ENCODE measurements at regions of chr17 and their contacts with region 1.

Region 1: DNA sequence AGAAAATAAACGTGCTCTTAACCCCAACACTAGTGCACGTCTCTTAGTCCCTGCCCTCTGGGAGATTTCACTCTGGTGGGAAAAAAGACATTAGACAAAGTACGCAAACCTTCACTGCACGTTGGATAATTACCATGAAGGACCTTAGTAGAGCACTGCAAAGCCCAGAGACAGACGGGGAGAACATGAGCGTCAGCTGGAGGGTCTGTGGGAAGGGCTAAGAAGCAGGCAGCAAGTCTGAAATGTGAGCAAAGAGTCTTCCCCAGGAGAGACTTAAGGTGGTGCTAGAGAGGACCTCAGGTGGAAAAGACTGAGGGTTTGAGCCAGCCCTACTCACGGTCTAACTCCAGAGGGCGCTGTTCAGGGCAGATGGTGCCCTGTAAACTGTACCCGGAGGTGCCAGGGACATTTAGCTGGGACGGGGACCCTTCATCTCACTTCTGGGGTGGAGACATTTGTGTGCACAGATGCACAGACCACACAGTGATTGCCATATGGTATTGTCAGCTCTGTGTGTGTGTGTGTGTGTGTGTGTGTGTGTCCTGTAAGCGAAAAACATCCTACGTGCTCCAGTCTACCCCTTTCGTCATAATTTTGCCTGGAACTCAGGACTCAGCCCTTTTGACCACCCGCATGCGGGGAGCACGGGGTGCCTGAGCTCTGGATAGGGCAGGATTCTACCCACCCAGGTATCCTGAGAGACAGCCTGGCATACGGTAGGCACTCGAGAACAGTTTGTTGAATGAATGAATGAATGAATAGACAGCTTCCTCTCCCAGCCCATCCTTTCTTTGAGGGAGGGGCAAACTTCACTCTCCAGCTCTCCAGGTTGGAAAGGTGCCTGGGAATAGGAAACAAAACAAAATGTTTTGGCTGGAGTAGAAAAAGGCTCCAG is 10.1 kb upstream of the STAC2 start:
- DNase-seq: peak in 6 of 9 experiments; percentile 32 to 80 (median 60)
- ATAC-seq: peak; percentile 42
- H3K4me3 ChIP-seq: no peak overlapping the region
- H3K4me3 Mint-ChIP-seq: no peak overlapping the region
- H3K27ac ChIP-seq: peak overlapping the region in 1 of 2 experiments; percentile 48
- H3K27ac Mint-ChIP-seq: peak overlapping the region; percentile 79
- H3K4me1 ChIP-seq: peaks cover 55% of the 10 kb centered on the region
- H3K4me1 Mint-ChIP-seq: peaks cover 38% of the 10 kb centered on the region
- H3K27me3 ChIP-seq: no peaks in the 10 kb centered on the region
- H3K27me3 Mint-ChIP-seq: peaks cover 8% of the 10 kb centered on the region
- CTCF ChIP-seq: peak; percentile 59

Region 2: DNA sequence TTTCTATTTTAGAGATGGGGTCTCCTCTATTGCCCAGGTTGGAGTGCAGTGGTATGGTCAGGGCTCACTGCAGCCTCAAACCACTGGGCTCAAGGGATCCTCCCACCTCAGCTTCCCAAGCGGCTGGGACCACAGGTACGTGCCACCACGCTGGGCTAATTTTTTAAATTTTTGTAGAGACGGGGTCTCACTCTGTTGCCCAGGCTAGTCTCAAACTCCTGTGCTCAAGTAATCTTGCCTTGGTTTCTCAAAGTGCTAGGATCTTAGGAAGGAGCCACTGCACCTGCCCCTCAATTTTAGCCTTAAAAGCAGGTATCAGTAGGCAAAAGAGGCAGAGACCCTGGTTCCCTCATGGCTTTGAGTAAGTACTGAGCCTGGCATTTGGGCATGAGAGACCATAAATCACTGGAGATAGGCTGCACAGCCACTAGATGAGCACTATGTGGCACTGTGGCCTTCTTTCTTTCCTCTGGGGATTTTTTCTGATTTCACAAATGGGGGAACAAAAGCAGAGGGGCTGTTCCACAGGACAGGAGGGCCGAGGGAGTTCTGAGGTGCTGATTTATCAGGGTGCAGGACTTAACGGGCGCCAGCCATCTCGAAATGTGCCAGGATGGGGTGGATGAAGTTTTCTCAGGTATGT is 166.6 kb before region 1 on chr17:
- CTCF ChIA-PET with region 1: interaction called, 3 read pairs
- POLR2A ChIA-PET with region 1: no interaction called
- intact Hi-C with region 1: loop called in 1 of 2 experiments (anchors 5 kb)
- DNase-seq: peak in 7 of 9 experiments; percentile 2 to 76 (median 32)
- ATAC-seq: peak; percentile 96
- H3K4me3 ChIP-seq: no peak overlapping the region
- H3K4me3 Mint-ChIP-seq: no peak overlapping the region
- H3K27ac ChIP-seq: no peak overlapping the region
- H3K27ac Mint-ChIP-seq: peak overlapping the region; percentile 57
- H3K4me1 ChIP-seq: no peaks in the 10 kb centered on the region
- H3K4me1 Mint-ChIP-seq: peaks cover 5% of the 10 kb centered on the region
- H3K27me3 ChIP-seq: no peaks in the 10 kb centered on the region
- H3K27me3 Mint-ChIP-seq: no peaks in the 10 kb centered on the region
- CTCF ChIP-seq: peak; percentile 65

Region 3: GRCh38 chr17:39164675-39165143 is 71.1 kb before region 1 on chr17:
- CTCF ChIA-PET with region 1: interaction called, 11 read pairs
- POLR2A ChIA-PET with region 1: no interaction called
- intact Hi-C with region 1: no loop called
- DNase-seq: peak; percentile 53 to 90 (median 74)
- ATAC-seq: peak; percentile 89
- H3K4me3 ChIP-seq: peak overlapping the region; percentile 68 to 95
- H3K4me3 Mint-ChIP-seq: peak overlapping the region; percentile 91
- H3K27ac ChIP-seq: peak overlapping the region in 1 of 2 experiments; percentile 21
- H3K27ac Mint-ChIP-seq: peak overlapping the region; percentile 67
- H3K4me1 ChIP-seq: peaks cover 20% of the 10 kb centered on the region
- H3K4me1 Mint-ChIP-seq: peaks cover 33% of the 10 kb centered on the region
- H3K27me3 ChIP-seq: peaks cover 0 to 3% of the 10 kb centered on the region in 2 experiments
- H3K27me3 Mint-ChIP-seq: peaks cover 11% of the 10 kb centered on the region
- CTCF ChIP-seq: peak; percentile 80

Region 4: DNA sequence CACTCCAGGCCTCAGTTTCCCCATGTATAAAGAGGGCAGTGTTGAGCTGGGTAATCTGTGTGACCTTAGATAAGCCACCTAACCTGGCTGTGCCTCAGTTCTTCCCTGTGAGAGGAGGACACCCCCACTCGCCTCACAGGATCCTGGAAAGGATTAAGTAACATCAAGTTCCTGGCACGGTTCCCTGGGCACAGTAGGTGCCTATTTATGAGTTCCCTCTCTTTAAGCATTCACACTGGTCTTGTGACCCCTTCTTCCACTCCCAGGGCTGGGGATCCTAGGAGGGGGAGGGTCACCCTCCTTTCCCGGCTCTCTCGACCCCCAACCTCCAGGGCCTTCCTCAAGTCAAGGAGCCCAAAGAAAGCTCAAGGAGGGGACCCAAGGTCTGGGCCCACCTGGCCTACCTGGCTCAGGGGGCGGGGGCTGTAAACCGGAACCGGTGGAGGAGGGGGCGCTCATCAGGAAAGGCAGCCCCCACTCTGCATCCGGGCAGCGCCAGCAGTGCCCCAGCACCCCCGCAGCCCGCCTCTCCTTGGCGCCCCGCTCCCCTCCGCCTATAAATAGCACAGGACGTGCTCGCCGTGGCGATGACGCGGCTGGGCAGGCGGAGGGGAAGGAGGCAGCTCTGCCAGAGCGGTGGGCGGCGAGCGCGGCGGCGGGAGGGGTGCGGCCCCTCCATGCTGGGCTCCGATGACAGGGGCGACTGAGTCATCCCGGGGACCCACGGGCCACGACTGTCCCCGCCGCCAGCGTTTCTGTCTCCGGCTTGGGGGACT is 26.3 kb before region 1 on chr17:
- CTCF ChIA-PET with region 1: interaction called, 429 read pairs
- POLR2A ChIA-PET with region 1: interaction called, 14 read pairs
- intact Hi-C with region 1: loop called (anchors 1 kb)
- DNase-seq: peak; percentile 35 to 86 (median 79)
- ATAC-seq: peak; percentile 84
- H3K4me3 ChIP-seq: peak overlapping the region; percentile 34 to 49
- H3K4me3 Mint-ChIP-seq: peak overlapping the region; percentile 66
- H3K27ac ChIP-seq: peak overlapping the region; percentile 19 to 60
- H3K27ac Mint-ChIP-seq: peak overlapping the region; percentile 73
- H3K4me1 ChIP-seq: peaks cover 35% of the 10 kb centered on the region
- H3K4me1 Mint-ChIP-seq: peaks cover 31% of the 10 kb centered on the region
- H3K27me3 ChIP-seq: peaks cover 0 to 5% of the 10 kb centered on the region in 2 experiments
- H3K27me3 Mint-ChIP-seq: no peaks in the 10 kb centered on the region
- CTCF ChIP-seq: no peak

Region 5: DNA sequence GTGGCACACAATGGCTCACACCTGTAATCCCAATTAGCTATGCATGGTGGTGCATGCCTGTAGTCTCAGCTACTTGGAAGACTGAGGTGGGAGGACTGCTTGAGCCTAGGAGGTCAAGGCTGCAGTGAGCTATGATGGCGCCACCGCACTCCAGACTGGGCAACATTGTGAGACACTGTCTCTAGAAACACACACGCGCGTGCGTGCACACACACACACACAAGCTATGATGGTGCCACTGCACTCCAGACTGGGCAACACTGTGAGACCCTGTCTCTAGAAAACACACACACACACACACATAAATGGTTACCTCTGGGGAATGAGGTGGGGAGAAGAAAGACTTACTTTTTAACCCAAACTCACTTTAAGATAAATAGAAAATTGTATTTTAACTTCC is 149.2 kb after region 1 on chr17:
- CTCF ChIA-PET with region 1: no interaction called
- POLR2A ChIA-PET with region 1: no interaction called
- intact Hi-C with region 1: no loop called
- DNase-seq: no peak
- ATAC-seq: no peak
- H3K4me3 ChIP-seq: no peak overlapping the region
- H3K4me3 Mint-ChIP-seq: no peak overlapping the region
- H3K27ac ChIP-seq: no peak overlapping the region
- H3K27ac Mint-ChIP-seq: no peak overlapping the region
- H3K4me1 ChIP-seq: no peaks in the 10 kb centered on the region
- H3K4me1 Mint-ChIP-seq: peaks cover 25% of the 10 kb centered on the region
- H3K27me3 ChIP-seq: no peaks in the 10 kb centered on the region
- H3K27me3 Mint-ChIP-seq: no peaks in the 10 kb centered on the region
- CTCF ChIP-seq: no peak

Region 6: DNA sequence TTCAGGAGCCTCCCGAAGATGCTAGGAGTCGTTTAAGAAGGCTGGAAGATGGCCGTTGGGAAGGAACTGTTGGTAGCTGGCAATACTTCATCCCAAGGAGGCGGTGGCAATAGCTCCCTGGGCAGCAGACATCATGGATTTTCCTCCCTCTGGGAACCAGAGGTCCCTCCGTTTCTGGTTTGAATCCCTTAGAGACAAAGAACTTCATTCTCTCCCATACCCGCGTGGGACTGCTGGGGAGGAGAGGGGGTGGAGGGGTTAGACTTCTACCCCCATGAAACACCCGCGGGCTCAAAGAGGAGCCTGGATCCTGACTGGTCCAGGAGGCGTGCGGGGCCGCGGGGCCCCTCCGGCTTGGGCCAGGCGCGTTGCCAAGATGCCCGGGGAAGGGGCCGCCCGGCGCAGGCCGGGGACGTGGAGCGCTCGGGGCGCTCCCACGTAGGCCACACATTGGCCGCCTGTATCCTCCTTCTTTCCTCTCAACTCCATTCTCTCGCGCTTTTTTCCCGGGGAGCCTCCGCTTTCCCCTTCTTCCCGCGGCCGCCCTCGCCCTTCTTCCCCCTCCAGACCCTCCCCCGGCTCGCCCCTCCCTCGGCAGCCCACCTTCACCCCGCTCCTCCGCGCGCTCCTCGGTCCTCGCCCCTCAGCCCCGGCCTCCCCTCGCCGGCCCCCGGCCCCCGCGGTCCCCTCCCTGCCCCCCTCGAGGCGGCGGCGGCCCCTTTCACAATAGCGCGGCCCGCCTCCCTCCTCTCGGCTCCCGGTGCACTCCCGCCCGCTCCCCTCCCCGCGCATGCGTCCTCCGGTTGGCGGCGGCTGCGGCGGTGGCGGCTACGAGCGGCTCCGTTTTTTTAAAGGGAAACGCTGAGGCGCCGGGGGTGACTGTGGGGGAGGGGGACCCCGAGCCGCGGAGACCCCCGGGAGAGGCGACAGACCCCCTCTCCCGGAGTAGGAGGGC is 885.7 kb after region 1 on chr17 and contains the start of gene MSL1:
- CTCF ChIA-PET with region 1: no interaction called
- POLR2A ChIA-PET with region 1: no interaction called
- intact Hi-C with region 1: no loop called
- DNase-seq: peak; percentile 69 to 92 (median 85)
- ATAC-seq: peak; percentile 65
- H3K4me3 ChIP-seq: peak within 1 kb of the TSS; percentile 75 to 93
- H3K4me3 Mint-ChIP-seq: peak within 1 kb of the TSS; percentile 81
- H3K27ac ChIP-seq: peak within 1 kb of the TSS; percentile 40 to 71
- H3K27ac Mint-ChIP-seq: peak within 1 kb of the TSS; percentile 83
- H3K4me1 ChIP-seq: peaks cover 14% of the 10 kb centered on the region
- H3K4me1 Mint-ChIP-seq: peaks cover 44% of the 10 kb centered on the region
- H3K27me3 ChIP-seq: no peaks in the 10 kb centered on the region
- H3K27me3 Mint-ChIP-seq: no peaks in the 10 kb centered on the region
- CTCF ChIP-seq: no peak
- total RNA-seq, gene MSL1: 43.8 to 46.6 TPM